Endothelial cell of umbilical vein (primary cell): ENCODE measurements at regions of chr2 and their contacts with region 1.

Region 1: DNA sequence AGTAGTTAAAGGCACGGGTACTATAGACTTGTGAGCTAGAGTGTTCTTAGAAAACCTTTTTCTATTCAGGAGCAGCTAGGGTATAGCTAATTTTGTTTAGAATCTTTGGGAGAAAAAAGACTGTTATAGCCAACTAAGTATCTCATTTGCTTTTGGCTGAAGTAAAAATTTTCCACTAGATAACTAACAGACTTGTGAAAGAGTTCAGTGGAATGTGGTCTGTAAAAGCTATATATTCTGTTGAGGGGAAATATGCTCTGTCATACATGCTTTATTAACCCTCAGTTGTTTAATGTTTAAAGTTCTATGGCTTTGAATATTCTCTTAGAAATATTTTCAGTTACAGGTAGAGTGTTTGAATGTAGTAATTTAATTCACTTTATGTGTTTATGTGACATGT is 49.7 kb downstream of the RIF1 start:
- DNase-seq: no peak
- H3K4me3 ChIP-seq: no peak overlapping the region
- H3K27ac ChIP-seq: no peak overlapping the region
- H3K4me1 ChIP-seq: no peaks in the 10 kb centered on the region
- H3K27me3 ChIP-seq: no peaks in the 10 kb centered on the region
- CTCF ChIP-seq: no peak
- POLR2A ChIP-seq: no peak

Region 2: GRCh38 chr2:151374426-151374825 is 84.9 kb before region 1 on chr2:
- CTCF ChIA-PET with region 1: no interaction called
- POLR2A ChIA-PET with region 1: interaction called, 12 read pairs
- dilution Hi-C with region 1: no loop called
- intact Hi-C with region 1: no loop called
- DNase-seq: peak; percentile 66
- H3K4me3 ChIP-seq: no peak overlapping the region
- H3K27ac ChIP-seq: peak overlapping the region; percentile 55
- H3K4me1 ChIP-seq: peaks cover 10% of the 10 kb centered on the region
- H3K27me3 ChIP-seq: no peaks in the 10 kb centered on the region
- CTCF ChIP-seq: no peak
- POLR2A ChIP-seq: no peak